ENCODE measurements at regions of chr22 and their contacts with region 1.

Region 1: GRCh38 chr22:40436505-40437451 is 66.4 kb downstream of the SGSM3 start:
- DNase-seq: peak; percentile 18
- H3K4me3 Mint-ChIP-seq: no peak overlapping the region
- H3K27ac Mint-ChIP-seq: peak overlapping the region; percentile 72
- H3K4me1 Mint-ChIP-seq: peaks cover 53% of the 10 kb centered on the region
- H3K27me3 Mint-ChIP-seq: no peaks in the 10 kb centered on the region

Region 2: DNA sequence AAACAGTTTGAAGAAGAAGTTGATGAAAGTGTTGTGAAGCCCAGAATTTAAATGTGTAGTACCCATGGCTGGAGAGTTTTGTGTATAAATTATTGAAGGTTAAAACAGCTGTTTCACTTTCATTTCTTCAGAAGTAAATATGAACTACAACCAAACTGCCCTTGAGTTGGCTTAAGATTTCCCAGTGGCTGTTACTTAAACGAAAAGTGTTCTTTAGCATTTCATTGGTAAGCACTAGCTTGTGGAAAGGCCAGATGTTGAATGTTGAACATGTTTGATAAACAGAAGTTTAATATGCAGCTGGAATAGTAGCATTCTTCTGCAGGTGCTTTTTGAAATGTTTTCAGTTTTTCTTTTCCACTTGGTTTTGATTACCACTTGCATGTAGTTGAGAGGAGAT is 342.3 kb before region 1 on chr22:
- CTCF ChIA-PET with region 1: no interaction called
- intact Hi-C with region 1: no loop called
- DNase-seq: no peak
- H3K4me3 Mint-ChIP-seq: peak overlapping the region; percentile 65
- H3K27ac Mint-ChIP-seq: peak overlapping the region; percentile 76
- H3K4me1 Mint-ChIP-seq: peaks cover 67% of the 10 kb centered on the region
- H3K27me3 Mint-ChIP-seq: no peaks in the 10 kb centered on the region

Region 3: GRCh38 chr22:40449676-40450035 is 12.9 kb after region 1 on chr22:
- CTCF ChIA-PET with region 1: interaction called, 23 read pairs
- intact Hi-C with region 1: no loop called
- DNase-seq: no peak
- H3K4me3 Mint-ChIP-seq: no peak overlapping the region
- H3K27ac Mint-ChIP-seq: no peak overlapping the region
- H3K4me1 Mint-ChIP-seq: peaks cover 78% of the 10 kb centered on the region
- H3K27me3 Mint-ChIP-seq: no peaks in the 10 kb centered on the region

Region 4: GRCh38 chr22:40473703-40474102 is 36.9 kb after region 1 on chr22:
- CTCF ChIA-PET with region 1: interaction called, 30 read pairs
- intact Hi-C with region 1: no loop called
- DNase-seq: no peak
- H3K4me3 Mint-ChIP-seq: no peak overlapping the region
- H3K27ac Mint-ChIP-seq: no peak overlapping the region
- H3K4me1 Mint-ChIP-seq: peaks cover 17% of the 10 kb centered on the region
- H3K27me3 Mint-ChIP-seq: no peaks in the 10 kb centered on the region

Region 5: GRCh38 chr22:40487663-40488249 is 51.0 kb after region 1 on chr22:
- CTCF ChIA-PET with region 1: interaction called, 104 read pairs
- intact Hi-C with region 1: loop called (anchors 1 kb)
- DNase-seq: no peak
- H3K4me3 Mint-ChIP-seq: no peak overlapping the region
- H3K27ac Mint-ChIP-seq: no peak overlapping the region
- H3K4me1 Mint-ChIP-seq: peaks cover 42% of the 10 kb centered on the region
- H3K27me3 Mint-ChIP-seq: no peaks in the 10 kb centered on the region

Region 6: DNA sequence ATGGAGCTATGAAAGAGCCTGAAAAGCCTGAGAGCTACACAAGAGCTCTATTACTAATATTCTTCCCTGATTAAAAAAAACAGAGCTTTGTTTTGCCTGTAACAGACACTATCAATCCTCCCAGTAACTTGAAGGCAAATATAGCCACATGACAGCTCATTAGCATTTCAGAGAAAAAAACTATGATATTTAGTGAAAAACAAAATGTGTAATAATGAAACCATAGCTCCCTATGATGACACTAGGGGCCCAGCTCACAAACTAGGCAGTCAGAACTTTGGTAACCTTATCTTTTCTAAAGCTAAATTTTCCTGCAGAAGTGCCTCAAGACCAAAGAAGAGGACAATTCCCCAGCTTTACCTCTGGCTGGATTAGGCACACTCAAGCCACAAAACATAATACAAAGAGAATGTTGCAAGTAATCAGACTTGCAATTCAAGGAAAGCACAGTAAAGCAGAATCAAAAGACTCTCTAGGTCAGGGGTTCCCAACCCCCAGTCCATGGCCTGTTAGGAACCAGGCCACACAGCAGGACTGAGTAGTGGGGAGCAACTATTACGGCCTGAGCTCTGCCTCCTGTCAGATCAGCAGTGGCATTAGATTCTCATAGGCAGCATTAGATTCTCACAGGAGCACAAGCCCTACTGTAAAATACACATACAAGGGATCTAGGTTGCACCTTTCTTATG is 146.4 kb after region 1 on chr22:
- CTCF ChIA-PET with region 1: interaction called, 7 read pairs
- intact Hi-C with region 1: loop called (anchors 5 kb)
- DNase-seq: peak; percentile 49
- H3K4me3 Mint-ChIP-seq: no peak overlapping the region
- H3K27ac Mint-ChIP-seq: peak overlapping the region; percentile 34
- H3K4me1 Mint-ChIP-seq: peaks cover 42% of the 10 kb centered on the region
- H3K27me3 Mint-ChIP-seq: no peaks in the 10 kb centered on the region

Region 7: GRCh38 chr22:40898850-40899357 is 462.1 kb after region 1 on chr22:
- CTCF ChIA-PET with region 1: interaction called, 5 read pairs
- intact Hi-C with region 1: loop called (anchors 5 kb)
- DNase-seq: peak; percentile 45
- H3K4me3 Mint-ChIP-seq: peak overlapping the region; percentile 17
- H3K27ac Mint-ChIP-seq: peak overlapping the region; percentile 54
- H3K4me1 Mint-ChIP-seq: peaks cover 12% of the 10 kb centered on the region
- H3K27me3 Mint-ChIP-seq: no peaks in the 10 kb centered on the region

Measured in activated naive CD4-positive, alpha-beta T cell treated with anti-CD3 and anti-CD28 coated beads for 36 hours (primary cell).